Endothelial cell of umbilical vein (primary cell): ENCODE measurements at regions of chr1 and their contacts with region 1.

Region 1: DNA sequence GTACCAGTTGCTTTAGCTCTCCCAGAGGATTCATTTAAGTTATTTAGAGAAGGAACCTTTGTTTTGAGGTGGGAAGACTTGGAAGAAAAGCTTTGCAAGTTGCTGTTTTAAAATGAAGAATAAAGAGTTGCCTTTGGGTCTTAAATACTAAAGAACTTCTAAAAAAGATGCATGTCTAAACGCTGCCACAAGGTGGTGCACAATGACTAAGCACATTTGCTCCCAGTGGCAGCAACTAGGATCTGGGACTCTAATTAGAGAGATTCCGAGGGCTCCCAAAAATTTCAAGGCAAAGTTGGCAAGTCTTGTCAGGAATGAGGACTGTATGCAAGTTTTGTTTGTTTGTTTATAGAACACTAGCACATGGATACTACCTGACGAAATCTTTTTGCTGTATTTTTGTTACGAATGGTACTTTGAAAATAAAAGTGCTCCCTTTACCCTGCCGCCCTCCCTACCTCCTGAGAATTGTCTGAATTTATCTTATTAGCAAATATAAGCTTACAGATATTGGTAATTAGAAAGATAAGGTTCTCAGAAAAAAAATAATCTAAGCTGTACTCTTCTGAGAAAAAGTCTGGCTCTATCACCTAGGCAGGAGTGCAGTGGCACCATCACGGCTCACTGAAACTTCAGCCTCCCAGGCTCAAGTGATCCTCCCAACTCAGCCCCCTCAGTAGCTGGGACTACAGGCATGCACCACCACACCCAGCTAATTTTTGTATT is 121.8 kb downstream of the HFM1 start:
- DNase-seq: peak; percentile 69
- H3K4me3 ChIP-seq: no peak overlapping the region
- H3K27ac ChIP-seq: no peak overlapping the region
- H3K4me1 ChIP-seq: no peaks in the 10 kb centered on the region
- H3K27me3 ChIP-seq: peaks cover 5 to 7% of the 10 kb centered on the region in 2 experiments
- CTCF ChIP-seq: peak; percentile 64 to 66
- POLR2A ChIP-seq: no peak

Region 2: DNA sequence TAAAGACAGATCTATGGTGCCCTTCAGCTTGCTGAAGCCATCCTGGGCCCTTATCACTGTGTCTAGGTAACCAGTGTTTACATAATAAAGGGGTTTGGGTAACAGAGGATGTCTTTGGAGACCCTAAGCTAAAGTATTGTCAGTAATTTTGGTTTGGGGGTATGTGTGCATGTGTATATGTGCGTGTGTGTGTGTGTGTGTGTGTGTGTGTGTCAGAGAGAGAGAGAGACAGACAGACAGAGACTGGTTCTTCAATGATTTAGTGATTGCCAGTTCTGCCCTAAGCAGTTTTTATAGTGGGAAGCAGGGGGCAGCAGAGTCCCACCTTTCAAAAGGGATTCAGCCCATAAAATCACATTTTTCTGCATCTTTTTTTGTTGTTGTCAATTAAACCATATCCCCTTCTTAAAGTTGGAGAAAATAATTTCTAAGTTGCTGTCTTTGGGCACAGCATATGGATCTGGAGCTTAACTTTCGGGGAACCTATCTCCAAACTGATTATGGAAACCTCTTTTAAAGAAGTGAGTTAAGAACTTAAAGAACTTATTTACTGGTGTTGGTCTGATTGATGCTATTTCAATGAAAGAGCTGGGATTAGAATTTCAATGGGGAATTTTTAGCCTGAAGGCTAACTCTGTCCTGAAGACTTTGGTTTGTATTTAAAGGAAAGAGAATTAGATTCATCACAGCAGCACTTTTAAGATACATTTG is 1236.8 kb before region 1 on chr1:
- CTCF ChIA-PET with region 1: no interaction called
- POLR2A ChIA-PET with region 1: no interaction called
- dilution Hi-C with region 1: no loop called
- intact Hi-C with region 1: loop called (anchors 10 kb)
- DNase-seq: peak; percentile 35
- H3K4me3 ChIP-seq: no peak overlapping the region
- H3K27ac ChIP-seq: no peak overlapping the region
- H3K4me1 ChIP-seq: no peaks in the 10 kb centered on the region
- H3K27me3 ChIP-seq: peaks cover 8 to 23% of the 10 kb centered on the region in 2 experiments
- CTCF ChIP-seq: peak; percentile 57 to 65
- POLR2A ChIP-seq: no peak

Region 3: GRCh38 chr1:90579212-90579802 is 703.6 kb before region 1 on chr1:
- CTCF ChIA-PET with region 1: interaction called, 20 read pairs
- POLR2A ChIA-PET with region 1: no interaction called
- dilution Hi-C with region 1: no loop called
- intact Hi-C with region 1: loop called (anchors 2 kb)
- DNase-seq: peak; percentile 51
- H3K4me3 ChIP-seq: no peak overlapping the region
- H3K27ac ChIP-seq: no peak overlapping the region
- H3K4me1 ChIP-seq: no peaks in the 10 kb centered on the region
- H3K27me3 ChIP-seq: no peaks in the 10 kb centered on the region
- CTCF ChIP-seq: peak; percentile 36 to 46
- POLR2A ChIP-seq: no peak

Region 4: GRCh38 chr1:90687747-90688146 is 595.1 kb before region 1 on chr1:
- CTCF ChIA-PET with region 1: no interaction called
- POLR2A ChIA-PET with region 1: no interaction called
- dilution Hi-C with region 1: no loop called
- intact Hi-C with region 1: no loop called
- DNase-seq: no peak
- H3K4me3 ChIP-seq: no peak overlapping the region
- H3K27ac ChIP-seq: no peak overlapping the region
- H3K4me1 ChIP-seq: no peaks in the 10 kb centered on the region
- H3K27me3 ChIP-seq: no peaks in the 10 kb centered on the region
- CTCF ChIP-seq: no peak
- POLR2A ChIP-seq: no peak

Region 5: GRCh38 chr1:91201694-91202093 is 81.2 kb before region 1 on chr1:
- CTCF ChIA-PET with region 1: no interaction called
- POLR2A ChIA-PET with region 1: no interaction called
- dilution Hi-C with region 1: no loop called
- intact Hi-C with region 1: loop called (anchors 1 kb)
- DNase-seq: no peak
- H3K4me3 ChIP-seq: no peak overlapping the region
- H3K27ac ChIP-seq: no peak overlapping the region
- H3K4me1 ChIP-seq: no peaks in the 10 kb centered on the region
- H3K27me3 ChIP-seq: peaks cover 0 to 2% of the 10 kb centered on the region in 2 experiments
- CTCF ChIP-seq: no peak
- POLR2A ChIP-seq: no peak

Region 6: DNA sequence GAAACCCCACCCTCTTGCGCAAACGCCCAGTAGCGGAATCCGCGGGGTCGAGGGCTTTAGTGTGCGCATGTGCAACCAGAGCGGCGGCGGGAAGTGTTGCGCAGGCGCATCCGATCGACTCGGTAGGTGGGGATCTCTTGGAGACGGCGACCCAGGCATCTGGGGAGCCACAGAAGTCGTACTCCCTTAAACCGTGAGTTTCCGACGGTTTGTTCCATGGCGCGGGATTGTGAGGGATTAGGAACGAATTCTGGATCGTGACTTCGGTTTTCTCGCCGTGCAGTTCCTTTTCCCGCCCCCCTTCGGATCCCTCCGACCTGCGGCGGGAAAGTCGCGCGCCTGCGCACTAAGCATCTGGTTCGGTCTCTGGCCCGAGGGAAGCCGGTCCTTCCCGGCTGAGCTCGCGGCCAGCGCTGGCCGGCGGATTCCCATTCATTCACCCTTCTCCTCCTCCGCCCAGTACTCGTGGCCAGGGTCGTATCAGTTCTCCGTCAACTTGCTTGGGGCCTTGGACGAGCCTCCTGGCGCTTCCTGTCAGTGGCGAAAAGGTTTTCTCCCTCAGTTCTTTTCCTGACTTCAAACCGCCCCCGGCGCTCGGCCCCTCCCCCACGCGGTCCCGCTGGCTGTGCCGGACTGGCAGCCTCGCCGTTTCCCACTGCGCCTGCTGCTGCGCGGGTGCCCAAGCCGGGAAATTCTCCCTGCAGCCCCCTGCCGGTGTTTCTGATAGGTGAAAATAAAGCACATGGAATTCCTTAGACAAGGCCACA is 218.1 kb after region 1 on chr1 and contains the start of gene CDC7:
- CTCF ChIA-PET with region 1: interaction called, 14 read pairs
- POLR2A ChIA-PET with region 1: no interaction called
- dilution Hi-C with region 1: no loop called
- intact Hi-C with region 1: loop called (anchors 1 kb)
- DNase-seq: peak; percentile 96
- H3K4me3 ChIP-seq: peak within 1 kb of the TSS; percentile 60 to 89 (median 62)
- H3K27ac ChIP-seq: peak within 1 kb of the TSS; percentile 91
- H3K4me1 ChIP-seq: peaks cover 16% of the 10 kb centered on the region
- H3K27me3 ChIP-seq: no peaks in the 10 kb centered on the region
- CTCF ChIP-seq: peak; percentile 51 to 54
- POLR2A ChIP-seq: peak; percentile 61
- total RNA-seq, gene CDC7: 11.7 and 13.4 TPM in 2 replicates